Activated CD8-positive, alpha-beta T cell treated with anti-CD3 and anti-CD28 coated beads for 36 hours (primary cell): ENCODE measurements at regions of chr3 and their contacts with region 1.

Region 1: GRCh38 chr3:108914774-108915641 is 38.7 kb downstream of the GUCA1C start:
- DNase-seq: peak; percentile 74
- ATAC-seq: peak; percentile 95
- H3K4me3 Mint-ChIP-seq: no peak overlapping the region
- H3K27ac Mint-ChIP-seq: peak overlapping the region; percentile 23
- H3K4me1 Mint-ChIP-seq: peaks cover 10% of the 10 kb centered on the region
- H3K27me3 Mint-ChIP-seq: peaks cover 4% of the 10 kb centered on the region
- CTCF ChIP-seq: peak; percentile 99

Region 2: GRCh38 chr3:108602249-108602934 is 312.6 kb before region 1 on chr3:
- CTCF ChIA-PET with region 1: interaction called, 11 read pairs
- POLR2A ChIA-PET with region 1: no interaction called
- intact Hi-C with region 1: no loop called
- DNase-seq: peak; percentile 54
- ATAC-seq: peak; percentile 79
- H3K4me3 Mint-ChIP-seq: peak overlapping the region; percentile 66
- H3K27ac Mint-ChIP-seq: peak overlapping the region; percentile 90
- H3K4me1 Mint-ChIP-seq: peaks cover 69% of the 10 kb centered on the region
- H3K27me3 Mint-ChIP-seq: no peaks in the 10 kb centered on the region
- CTCF ChIP-seq: no peak

Region 3: DNA sequence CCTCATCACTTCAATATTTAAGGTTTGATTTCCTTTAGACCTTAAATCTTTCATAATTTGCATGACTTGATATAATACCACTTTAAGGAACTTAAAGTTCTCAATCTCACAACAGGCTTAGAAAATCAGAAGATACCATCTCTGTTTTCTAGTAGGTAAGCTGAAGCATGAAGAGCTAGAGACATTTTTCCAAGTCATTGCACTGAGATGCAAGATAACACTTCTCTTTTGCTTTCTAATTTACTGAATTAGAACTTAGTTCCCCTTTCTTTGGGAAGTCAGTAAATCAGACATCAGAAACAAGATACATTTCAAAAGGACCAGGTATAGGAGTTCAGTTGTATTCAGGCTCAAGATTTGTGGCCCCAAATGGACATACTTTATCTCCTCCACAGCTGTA is 245.8 kb before region 1 on chr3:
- CTCF ChIA-PET with region 1: interaction called, 103 read pairs
- POLR2A ChIA-PET with region 1: interaction called, 3 read pairs
- intact Hi-C with region 1: no loop called
- DNase-seq: no peak
- ATAC-seq: no peak
- H3K4me3 Mint-ChIP-seq: no peak overlapping the region
- H3K27ac Mint-ChIP-seq: no peak overlapping the region
- H3K4me1 Mint-ChIP-seq: peaks cover 13% of the 10 kb centered on the region
- H3K27me3 Mint-ChIP-seq: no peaks in the 10 kb centered on the region
- CTCF ChIP-seq: no peak

Region 4: DNA sequence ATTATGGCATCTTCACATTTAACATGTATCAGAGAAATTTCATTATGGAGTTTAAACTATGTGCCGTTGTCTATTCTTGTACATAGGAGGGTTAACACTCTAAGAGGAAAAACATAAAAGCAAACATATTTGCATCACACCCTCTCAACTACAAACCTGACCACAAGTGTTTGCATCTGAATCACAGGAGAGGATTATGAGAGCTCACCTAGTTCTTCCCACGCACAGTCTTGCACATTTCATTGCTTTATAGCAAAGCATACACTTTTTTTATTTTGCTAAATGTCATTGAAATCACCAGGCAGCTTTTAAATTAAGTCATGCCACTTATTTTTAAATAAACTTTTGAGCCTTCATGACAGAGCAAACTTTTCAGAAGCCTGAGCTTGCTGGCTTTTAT is 79.9 kb before region 1 on chr3:
- CTCF ChIA-PET with region 1: interaction called, 12 read pairs
- POLR2A ChIA-PET with region 1: no interaction called
- intact Hi-C with region 1: no loop called
- DNase-seq: peak; percentile 75
- ATAC-seq: peak; percentile 72
- H3K4me3 Mint-ChIP-seq: peak overlapping the region; percentile 68
- H3K27ac Mint-ChIP-seq: peak overlapping the region; percentile 79
- H3K4me1 Mint-ChIP-seq: peaks cover 86% of the 10 kb centered on the region
- H3K27me3 Mint-ChIP-seq: no peaks in the 10 kb centered on the region
- CTCF ChIP-seq: no peak

Region 5: GRCh38 chr3:108897883-108898282 is 17.1 kb before region 1 on chr3:
- CTCF ChIA-PET with region 1: interaction called, 19 read pairs
- POLR2A ChIA-PET with region 1: no interaction called
- intact Hi-C with region 1: no loop called
- DNase-seq: no peak
- ATAC-seq: peak; percentile 52
- H3K4me3 Mint-ChIP-seq: no peak overlapping the region
- H3K27ac Mint-ChIP-seq: peak overlapping the region; percentile 63
- H3K4me1 Mint-ChIP-seq: peaks cover 38% of the 10 kb centered on the region
- H3K27me3 Mint-ChIP-seq: no peaks in the 10 kb centered on the region
- CTCF ChIP-seq: no peak

Region 6: DNA sequence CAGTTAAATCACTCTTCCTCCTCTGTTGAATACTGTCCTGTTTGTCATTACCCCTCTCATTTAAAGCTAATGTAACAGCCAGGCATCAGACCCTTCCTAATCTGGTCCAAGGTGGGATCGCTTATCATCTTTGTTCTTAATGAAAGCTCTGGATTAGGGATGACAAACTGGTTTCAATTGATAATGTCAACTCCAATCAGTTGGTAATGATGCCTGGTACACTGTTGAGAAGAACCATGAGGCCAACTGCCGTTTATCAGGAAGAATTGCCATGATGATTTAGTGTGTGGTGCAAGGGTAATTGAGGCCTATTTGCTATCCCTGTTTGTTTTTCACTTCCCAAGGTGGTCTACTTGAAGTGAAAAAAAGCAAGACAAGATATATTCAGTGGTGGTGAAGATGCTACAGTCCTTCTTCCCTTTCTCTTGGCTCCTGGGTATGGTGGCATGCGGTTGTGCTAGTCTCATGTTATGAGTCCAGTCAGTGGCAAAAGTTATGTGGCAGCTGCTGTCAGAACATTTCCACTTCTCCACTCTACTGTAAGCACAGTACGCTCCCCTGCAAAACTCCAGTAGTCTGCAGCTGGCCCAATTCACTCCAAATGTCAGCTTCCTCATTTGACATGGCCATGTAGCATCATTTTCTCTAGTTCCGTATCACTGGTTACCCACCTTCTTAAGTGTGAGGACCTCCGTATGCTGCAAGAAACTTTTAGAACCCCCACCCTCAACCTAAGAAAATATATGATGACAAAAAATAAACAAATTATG is 130.4 kb after region 1 on chr3:
- CTCF ChIA-PET with region 1: no interaction called
- POLR2A ChIA-PET with region 1: no interaction called
- intact Hi-C with region 1: no loop called
- DNase-seq: no peak
- ATAC-seq: no peak
- H3K4me3 Mint-ChIP-seq: no peak overlapping the region
- H3K27ac Mint-ChIP-seq: no peak overlapping the region
- H3K4me1 Mint-ChIP-seq: no peaks in the 10 kb centered on the region
- H3K27me3 Mint-ChIP-seq: no peaks in the 10 kb centered on the region
- CTCF ChIP-seq: no peak

Region 7: DNA sequence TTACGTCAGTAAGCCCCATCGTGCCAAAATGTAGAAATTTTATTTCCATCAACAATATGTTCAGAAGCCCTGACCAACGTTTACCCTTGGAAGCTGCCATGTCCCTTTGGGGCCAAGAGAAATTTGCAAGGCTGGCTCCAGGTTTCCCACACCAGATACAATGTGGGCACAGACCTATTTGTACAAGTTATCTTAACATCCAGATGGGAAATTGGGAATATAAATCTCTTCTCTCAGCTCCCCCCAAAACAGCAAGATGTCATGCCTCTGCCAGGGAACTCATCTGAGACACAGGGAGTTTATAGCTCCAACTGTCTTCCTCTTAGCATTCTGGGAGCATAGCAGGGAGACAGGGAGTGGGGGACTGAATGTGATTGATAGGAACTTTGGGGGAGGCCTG is 410.6 kb after region 1 on chr3:
- CTCF ChIA-PET with region 1: no interaction called
- POLR2A ChIA-PET with region 1: no interaction called
- intact Hi-C with region 1: no loop called
- DNase-seq: no peak
- ATAC-seq: no peak
- H3K4me3 Mint-ChIP-seq: no peak overlapping the region
- H3K27ac Mint-ChIP-seq: no peak overlapping the region
- H3K4me1 Mint-ChIP-seq: no peaks in the 10 kb centered on the region
- H3K27me3 Mint-ChIP-seq: no peaks in the 10 kb centered on the region
- CTCF ChIP-seq: no peak